Thyroid gland (tissue), 4 donors: ENCODE measurements at regions of chr22 and their contacts with region 1.

Region 1: GRCh38 chr22:41940832-41941765 is 5.9 kb downstream of the CENPM start:
- DNase-seq: peak; percentile 83 to 84
- H3K4me3 ChIP-seq: no peak overlapping the region
- H3K27ac ChIP-seq: no peak overlapping the region
- H3K4me1 ChIP-seq: peaks cover 1 to 11% of the 10 kb centered on the region in 2 donors
- H3K27me3 ChIP-seq: no peaks in the 10 kb centered on the region
- CTCF ChIP-seq: peak; percentile 78 to 98 (median 92)
- POLR2A ChIP-seq: no peak

Region 2: DNA sequence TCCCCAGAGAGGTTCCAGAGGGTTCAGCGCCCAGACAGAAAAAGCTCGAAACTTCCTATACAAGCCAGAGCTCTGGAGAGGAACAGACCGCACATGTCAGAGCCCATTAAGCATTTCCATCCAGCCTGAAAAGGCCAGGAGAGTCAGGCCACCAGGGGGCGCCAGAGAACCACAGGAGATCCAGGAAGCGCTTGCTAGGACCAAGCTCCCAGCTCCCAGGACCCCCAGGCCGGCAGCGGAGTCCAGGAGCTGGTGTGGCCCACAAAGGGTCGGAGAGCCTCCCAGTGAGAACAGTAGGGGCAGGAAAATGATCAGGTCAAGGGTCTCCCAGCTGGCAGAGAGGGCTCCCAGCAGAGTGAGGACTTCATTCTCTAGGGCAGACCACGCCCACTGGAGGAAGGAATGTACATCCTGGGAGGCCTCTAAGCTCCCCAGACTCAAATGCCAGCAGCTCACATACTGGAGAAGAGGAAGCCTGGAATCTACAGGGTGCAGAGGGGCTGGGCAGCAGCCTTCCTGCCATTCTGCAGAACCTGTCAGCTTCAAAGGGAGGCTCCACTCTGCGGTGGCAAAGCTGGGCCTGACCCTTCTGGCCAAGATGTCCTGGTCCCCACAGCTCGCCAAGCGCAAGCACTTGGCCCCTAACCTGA is 243.8 kb before region 1 on chr22:
- intact Hi-C with region 1: loop called (anchors 5 kb)
- DNase-seq: peak; percentile 92 to 95
- H3K4me3 ChIP-seq: no peak overlapping the region
- H3K27ac ChIP-seq: peak overlapping the region in 2 of 3 donors; percentile 34 to 74
- H3K4me1 ChIP-seq: peaks cover 9 to 18% of the 10 kb centered on the region in 2 donors
- H3K27me3 ChIP-seq: no peaks in the 10 kb centered on the region
- CTCF ChIP-seq: peak; percentile 89 to 98 (median 95)
- POLR2A ChIP-seq: no peak

Region 3: DNA sequence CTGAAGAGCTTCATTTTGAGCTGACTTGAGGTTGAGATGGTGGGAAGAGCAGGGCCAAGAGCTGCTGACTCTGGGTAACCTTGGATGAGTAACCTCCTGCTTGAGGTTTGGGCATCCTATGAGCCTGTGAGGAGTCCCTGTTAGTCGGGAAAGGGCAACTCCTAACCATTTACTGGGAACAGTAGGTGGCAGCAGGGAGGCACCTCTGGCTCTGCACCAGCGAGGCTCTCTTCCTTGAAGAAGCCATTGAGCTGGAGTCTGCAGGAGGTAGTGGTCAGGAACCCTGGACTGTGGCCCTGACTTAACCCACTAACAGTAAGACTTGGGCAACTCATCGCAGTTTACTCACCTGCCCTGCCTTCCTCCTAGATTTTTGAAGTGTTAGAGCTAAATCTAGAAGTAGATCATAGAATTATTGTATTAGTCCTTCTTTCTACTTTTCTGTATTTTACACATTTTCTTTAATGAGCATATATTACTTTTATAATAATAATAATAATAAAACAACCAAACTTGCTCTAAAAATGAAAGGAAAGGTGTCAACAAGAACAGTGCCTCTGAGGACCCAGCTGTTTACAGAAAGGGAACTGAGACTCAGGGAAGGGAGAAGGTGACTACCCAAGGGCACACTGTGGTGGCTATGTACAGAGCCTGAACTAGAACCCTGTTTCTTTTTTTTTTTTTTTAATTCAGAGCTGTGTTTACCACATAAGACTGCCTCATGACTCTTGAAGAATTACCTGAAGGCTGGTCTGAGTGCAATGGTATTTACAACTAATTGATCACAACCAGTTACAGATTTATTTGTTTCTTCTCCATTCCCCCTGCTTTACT is 194.3 kb before region 1 on chr22:
- intact Hi-C with region 1: loop called (anchors 5 kb)
- DNase-seq: peak; percentile 79 to 83
- H3K4me3 ChIP-seq: no peak overlapping the region
- H3K27ac ChIP-seq: no peak overlapping the region
- H3K4me1 ChIP-seq: no peaks in the 10 kb centered on the region
- H3K27me3 ChIP-seq: no peaks in the 10 kb centered on the region
- CTCF ChIP-seq: peak; percentile 23 to 81 (median 69)
- POLR2A ChIP-seq: no peak

Region 4: DNA sequence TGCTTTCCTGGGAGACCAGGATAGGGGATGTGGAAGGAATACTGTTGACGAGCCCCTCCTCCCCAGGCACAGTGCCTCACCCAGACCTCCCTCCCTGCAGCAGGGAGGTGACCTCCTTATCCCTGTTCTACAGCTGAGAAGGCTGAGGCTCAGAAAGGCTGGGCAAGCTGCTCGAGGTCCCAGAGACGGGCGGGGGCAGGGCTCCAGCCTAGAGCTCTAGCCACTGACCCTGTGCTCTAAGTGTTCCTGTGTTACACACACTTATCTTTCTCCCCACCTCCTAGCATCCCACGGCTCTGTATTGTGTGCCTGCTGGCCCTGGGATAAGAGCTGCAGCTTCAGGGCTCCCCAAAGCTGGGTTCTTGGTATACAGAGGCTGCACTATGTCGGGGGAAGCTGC is 132.7 kb before region 1 on chr22:
- intact Hi-C with region 1: no loop called
- DNase-seq: no peak
- H3K4me3 ChIP-seq: no peak overlapping the region
- H3K27ac ChIP-seq: no peak overlapping the region
- H3K4me1 ChIP-seq: no peaks in the 10 kb centered on the region
- H3K27me3 ChIP-seq: no peaks in the 10 kb centered on the region
- CTCF ChIP-seq: no peak
- POLR2A ChIP-seq: no peak

Region 5: DNA sequence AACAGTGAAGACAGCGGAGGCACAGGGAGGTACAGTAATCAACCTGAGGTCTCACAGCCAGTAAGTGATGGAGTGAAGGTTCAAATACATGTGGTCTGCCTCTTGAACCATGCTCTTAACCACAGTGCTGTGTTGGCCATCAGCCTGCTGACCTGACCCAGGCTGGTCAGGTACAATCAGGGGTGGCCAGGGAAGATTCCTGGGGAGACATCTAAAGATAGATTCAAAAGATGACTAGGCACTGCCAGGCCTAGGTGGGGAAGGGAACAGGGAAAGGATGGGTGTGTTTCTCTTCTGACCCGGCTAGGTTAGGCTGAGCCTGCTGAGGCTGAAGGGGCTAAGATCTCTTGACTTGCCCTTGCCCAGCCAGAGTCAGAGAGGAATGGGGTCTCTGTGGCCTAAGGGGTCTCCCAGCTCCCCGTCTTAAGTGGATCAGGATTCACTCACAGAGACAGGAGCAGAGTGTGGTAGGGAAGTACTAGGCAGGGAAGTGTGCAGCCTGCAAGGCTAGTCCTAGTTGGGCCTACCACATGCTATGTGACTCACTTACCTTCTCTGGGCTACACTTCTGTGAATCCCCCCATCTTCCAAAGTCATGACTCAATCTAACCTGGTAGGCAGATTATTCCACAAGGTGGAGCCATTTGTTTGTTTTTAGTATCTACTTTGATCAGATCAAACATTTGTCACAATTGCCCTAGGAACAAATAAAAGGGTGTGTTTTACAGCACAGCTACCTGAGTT is 118.6 kb before region 1 on chr22:
- intact Hi-C with region 1: loop called (anchors 5 kb)
- DNase-seq: no peak
- H3K4me3 ChIP-seq: no peak overlapping the region
- H3K27ac ChIP-seq: no peak overlapping the region
- H3K4me1 ChIP-seq: peaks cover 0 to 5% of the 10 kb centered on the region in 2 donors
- H3K27me3 ChIP-seq: no peaks in the 10 kb centered on the region
- CTCF ChIP-seq: peak in 4 of 6 experiments; percentile 33 to 57 (median 46)
- POLR2A ChIP-seq: no peak